GM12878 (cell line): ENCODE measurements at regions of chr15 and their contacts with region 1.

Region 1: GRCh38 chr15:90886041-90886614 is 1.8 kb downstream of the FES start:
- DNase-seq: no peak
- ATAC-seq: peak; percentile 83
- H3K4me3 ChIP-seq: no peak overlapping the region; the same call in 1 of the 2 replicates
- H3K27ac ChIP-seq: peak overlapping the region; percentile 2; the same call in 1 of the 2 replicates
- H3K4me1 ChIP-seq: peaks cover 19% of the 10 kb centered on the region
- H3K27me3 ChIP-seq: no peaks in the 10 kb centered on the region
- CTCF ChIP-seq: peak; percentile 96 to 98 (median 97)
- EP300 ChIP-seq: no peak
- POLR2A ChIP-seq: no peak
- RAD21 ChIP-seq: peak; percentile 99

Region 2: DNA sequence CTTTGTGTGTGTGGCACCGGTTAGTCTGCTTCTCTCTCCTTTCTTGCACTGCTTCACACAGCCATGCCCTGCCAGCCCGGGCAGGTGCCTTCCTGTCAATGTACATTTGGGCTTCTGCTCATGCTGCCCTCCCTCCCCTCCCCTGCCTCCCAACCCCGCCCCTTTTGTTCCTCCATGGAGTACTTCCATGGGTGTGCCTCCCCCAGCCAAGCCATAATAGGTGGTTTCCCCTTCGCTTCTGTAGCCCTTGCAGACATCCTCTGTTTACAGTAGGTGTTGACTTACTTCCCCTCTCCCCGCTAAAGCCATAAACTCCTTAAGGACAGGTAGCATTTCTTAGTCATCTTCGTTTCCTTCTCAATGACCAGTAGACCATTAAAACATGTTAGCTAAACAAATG is 388.2 kb before region 1 on chr15:
- CTCF ChIA-PET with region 1: interaction called, 4 read pairs
- POLR2A ChIA-PET with region 1: no interaction called
- RAD21 ChIA-PET with region 1: no interaction called
- SMC1A ChIA-PET with region 1: interaction called, 3 read pairs
- in situ Hi-C with region 1: no loop called
- intact Hi-C with region 1: loop called (anchors 10 kb)
- DNase-seq: no peak
- ATAC-seq: no peak
- H3K4me3 ChIP-seq: no peak overlapping the region
- H3K27ac ChIP-seq: no peak overlapping the region
- H3K4me1 ChIP-seq: no peaks in the 10 kb centered on the region
- H3K27me3 ChIP-seq: no peaks in the 10 kb centered on the region
- CTCF ChIP-seq: no peak
- EP300 ChIP-seq: no peak
- POLR2A ChIP-seq: no peak
- RAD21 ChIP-seq: no peak

Region 3: GRCh38 chr15:90660195-90660998 is 225.7 kb before region 1 on chr15:
- CTCF ChIA-PET with region 1: interaction called, 8 read pairs
- POLR2A ChIA-PET with region 1: no interaction called
- RAD21 ChIA-PET with region 1: interaction called, 4 read pairs
- SMC1A ChIA-PET with region 1: interaction called, 10 read pairs
- in situ Hi-C with region 1: no loop called
- intact Hi-C with region 1: loop called (anchors 5 kb)
- DNase-seq: peak; percentile 86
- ATAC-seq: peak; percentile 72
- H3K4me3 ChIP-seq: peak overlapping the region; percentile 58
- H3K27ac ChIP-seq: peak overlapping the region; percentile 100
- H3K4me1 ChIP-seq: peaks cover 73% of the 10 kb centered on the region
- H3K27me3 ChIP-seq: no peaks in the 10 kb centered on the region
- CTCF ChIP-seq: no peak
- EP300 ChIP-seq: 0 out of 4 replicates have a peak, but pooled peaks of 1 of the 2 experiments have one; percentile 29
- POLR2A ChIP-seq: peak; percentile 77
- RAD21 ChIP-seq: no peak

Region 4: GRCh38 chr15:90716976-90717821 is 168.9 kb before region 1 on chr15 and contains the start of gene BLM:
- CTCF ChIA-PET with region 1: interaction called, 24 read pairs
- POLR2A ChIA-PET with region 1: interaction called, 6 read pairs
- RAD21 ChIA-PET with region 1: interaction called, 8 read pairs
- SMC1A ChIA-PET with region 1: interaction called, 9 read pairs
- in situ Hi-C with region 1: no loop called
- intact Hi-C with region 1: loop called (anchors 5 kb)
- DNase-seq: peak; percentile 93
- ATAC-seq: peak; percentile 99
- H3K4me3 ChIP-seq: peak within 1 kb of the TSS; percentile 91
- H3K27ac ChIP-seq: peak within 1 kb of the TSS; percentile 94
- H3K4me1 ChIP-seq: peaks cover 15% of the 10 kb centered on the region
- H3K27me3 ChIP-seq: no peaks in the 10 kb centered on the region
- CTCF ChIP-seq: peak in 1 of 3 experiments; percentile 22; a peak in 1 of 6 replicates
- EP300 ChIP-seq: no peak
- POLR2A ChIP-seq: peak; percentile 85
- RAD21 ChIP-seq: no peak
- polyA plus RNA-seq, gene BLM: 25.3 to 28.2 TPM

Region 5: DNA sequence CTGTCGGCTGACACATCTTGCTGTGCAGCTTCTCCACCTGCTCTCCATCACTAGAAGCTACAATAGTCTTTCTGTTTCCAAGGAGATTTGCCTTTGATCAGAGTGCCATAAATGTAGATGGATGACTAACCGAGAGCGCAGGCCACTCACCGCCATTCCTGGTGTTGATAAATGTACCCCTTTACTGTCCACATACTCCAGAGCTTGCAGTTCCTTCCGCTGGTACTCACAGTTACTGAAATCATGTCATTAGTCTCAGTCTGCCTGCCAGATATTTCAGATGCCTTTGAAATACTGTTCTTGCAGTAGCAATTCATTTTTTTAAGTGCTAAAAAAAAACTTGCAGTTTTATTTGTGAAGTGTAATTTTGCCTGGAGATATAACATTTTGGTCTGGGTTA is 96.7 kb before region 1 on chr15:
- CTCF ChIA-PET with region 1: interaction called, 14 read pairs
- POLR2A ChIA-PET with region 1: no interaction called
- RAD21 ChIA-PET with region 1: interaction called, 4 read pairs
- SMC1A ChIA-PET with region 1: interaction called, 12 read pairs
- in situ Hi-C with region 1: no loop called
- intact Hi-C with region 1: no loop called
- DNase-seq: no peak
- ATAC-seq: no peak
- H3K4me3 ChIP-seq: no peak overlapping the region
- H3K27ac ChIP-seq: no peak overlapping the region
- H3K4me1 ChIP-seq: peaks cover 11% of the 10 kb centered on the region
- H3K27me3 ChIP-seq: no peaks in the 10 kb centered on the region
- CTCF ChIP-seq: no peak
- EP300 ChIP-seq: no peak
- POLR2A ChIP-seq: no peak
- RAD21 ChIP-seq: no peak

Region 6: DNA sequence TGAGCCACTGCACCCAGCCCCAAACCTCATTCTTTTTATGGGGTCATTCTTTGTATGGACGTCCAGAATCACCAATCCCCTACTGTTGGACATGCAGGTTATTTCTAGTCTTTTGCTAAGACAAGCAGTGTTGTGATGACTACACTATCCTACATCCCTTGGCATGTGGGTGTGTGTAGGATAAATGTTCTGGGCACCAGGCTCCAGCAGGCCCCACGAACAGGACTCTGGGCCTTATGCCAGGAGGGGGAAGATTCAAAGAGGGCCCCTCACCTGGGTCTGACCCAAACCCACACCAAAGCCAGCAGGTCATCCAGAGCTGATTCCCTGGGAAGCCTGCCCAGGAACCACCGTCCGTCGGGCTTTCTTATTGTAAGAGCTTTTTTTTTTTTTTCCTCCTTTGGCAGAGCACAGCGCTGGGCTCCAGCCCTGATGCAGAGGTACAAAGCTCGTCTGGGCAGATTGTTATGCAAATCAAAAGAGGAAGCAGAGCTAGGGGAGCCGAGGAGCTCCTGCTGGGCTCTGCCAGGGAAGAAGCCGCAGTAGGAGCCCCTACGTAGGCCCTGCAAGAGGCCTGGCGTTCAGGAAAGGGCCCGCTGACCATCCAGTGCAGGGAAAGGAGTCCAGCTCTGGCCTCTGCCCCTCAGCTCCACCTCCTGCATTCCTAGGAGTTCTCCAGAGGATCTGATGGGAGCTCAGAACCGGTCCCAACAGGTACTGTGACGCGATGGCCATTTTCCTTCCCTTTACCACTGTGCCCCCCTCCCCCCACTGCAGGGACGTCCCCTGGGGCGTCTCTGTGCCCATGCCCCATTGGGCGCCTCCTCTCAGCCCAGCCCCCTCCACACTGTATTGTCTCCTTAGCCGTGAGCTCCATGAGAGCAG is 46.7 kb before region 1 on chr15:
- CTCF ChIA-PET with region 1: interaction called, 11 read pairs
- POLR2A ChIA-PET with region 1: no interaction called
- RAD21 ChIA-PET with region 1: interaction called, 7 read pairs
- SMC1A ChIA-PET with region 1: interaction called, 4 read pairs
- in situ Hi-C with region 1: no loop called
- intact Hi-C with region 1: no loop called
- DNase-seq: no peak
- ATAC-seq: peak; percentile 84
- H3K4me3 ChIP-seq: peak overlapping the region; percentile 50
- H3K27ac ChIP-seq: peak overlapping the region; percentile 56
- H3K4me1 ChIP-seq: peaks cover 22% of the 10 kb centered on the region
- H3K27me3 ChIP-seq: no peaks in the 10 kb centered on the region
- CTCF ChIP-seq: no peak
- EP300 ChIP-seq: no peak
- POLR2A ChIP-seq: peak; percentile 51
- RAD21 ChIP-seq: no peak

Region 7: GRCh38 chr15:90902040-90902839 is 16.1 kb after region 1 on chr15:
- CTCF ChIA-PET with region 1: interaction called, 34 read pairs
- POLR2A ChIA-PET with region 1: interaction called, 5 read pairs
- RAD21 ChIA-PET with region 1: interaction called, 9 read pairs
- SMC1A ChIA-PET with region 1: interaction called, 23 read pairs
- in situ Hi-C with region 1: no loop called
- intact Hi-C with region 1: no loop called
- DNase-seq: peak; percentile 59
- ATAC-seq: peak; percentile 87
- H3K4me3 ChIP-seq: peak overlapping the region; percentile 67
- H3K27ac ChIP-seq: peak overlapping the region; percentile 62
- H3K4me1 ChIP-seq: peaks cover 20% of the 10 kb centered on the region
- H3K27me3 ChIP-seq: no peaks in the 10 kb centered on the region
- CTCF ChIP-seq: peak; percentile 85 to 89 (median 85)
- EP300 ChIP-seq: no peak
- POLR2A ChIP-seq: peak; percentile 75
- RAD21 ChIP-seq: peak; percentile 45; the same call in 1 of the 2 replicates

Region 8: GRCh38 chr15:91104111-91104510 is 218.0 kb after region 1 on chr15:
- CTCF ChIA-PET with region 1: no interaction called
- POLR2A ChIA-PET with region 1: no interaction called
- RAD21 ChIA-PET with region 1: no interaction called
- SMC1A ChIA-PET with region 1: no interaction called
- in situ Hi-C with region 1: no loop called
- intact Hi-C with region 1: no loop called
- DNase-seq: no peak
- ATAC-seq: no peak
- H3K4me3 ChIP-seq: no peak overlapping the region
- H3K27ac ChIP-seq: no peak overlapping the region
- H3K4me1 ChIP-seq: no peaks in the 10 kb centered on the region
- H3K27me3 ChIP-seq: peaks cover 13 to 14% of the 10 kb centered on the region in 2 experiments
- CTCF ChIP-seq: no peak
- EP300 ChIP-seq: no peak
- POLR2A ChIP-seq: no peak
- RAD21 ChIP-seq: no peak